ENCODE measurements at regions of chr2 and their contacts with region 1.

Region 1: GRCh38 chr2:102251042-102251848 is 60.1 kb upstream of the IL1RL1 start:
- DNase-seq: peak; percentile 67
- ATAC-seq: peak; percentile 75
- H3K4me3 Mint-ChIP-seq: peak overlapping the region; percentile 75
- H3K27ac Mint-ChIP-seq: peak overlapping the region; percentile 32
- H3K4me1 Mint-ChIP-seq: peaks cover 40% of the 10 kb centered on the region
- H3K27me3 Mint-ChIP-seq: peaks cover 21% of the 10 kb centered on the region

Region 2: GRCh38 chr2:102355526-102356380 is 104.5 kb after region 1 on chr2 and contains the start of gene IL18R1:
- CTCF ChIA-PET with region 1: interaction called, 20 read pairs
- DNase-seq: peak; percentile 78
- ATAC-seq: peak; percentile 93
- H3K4me3 Mint-ChIP-seq: peak within 1 kb of the TSS; percentile 98
- H3K27ac Mint-ChIP-seq: peak within 1 kb of the TSS; percentile 92
- H3K4me1 Mint-ChIP-seq: peaks cover 38% of the 10 kb centered on the region
- H3K27me3 Mint-ChIP-seq: peaks cover 4% of the 10 kb centered on the region
- total RNA-seq, gene IL18R1: 19.8 to 25.9 TPM

Region 3: GRCh38 chr2:102449370-102449974 is 198.2 kb after region 1 on chr2:
- CTCF ChIA-PET with region 1: interaction called, 16 read pairs
- DNase-seq: peak; percentile 74
- ATAC-seq: peak; percentile 45
- H3K4me3 Mint-ChIP-seq: no peak overlapping the region
- H3K27ac Mint-ChIP-seq: no peak overlapping the region
- H3K4me1 Mint-ChIP-seq: peaks cover 2% of the 10 kb centered on the region
- H3K27me3 Mint-ChIP-seq: peaks cover 3% of the 10 kb centered on the region